H1 (cell line): ENCODE measurements at regions of chr1 and their contacts with region 1.

Region 1: DNA sequence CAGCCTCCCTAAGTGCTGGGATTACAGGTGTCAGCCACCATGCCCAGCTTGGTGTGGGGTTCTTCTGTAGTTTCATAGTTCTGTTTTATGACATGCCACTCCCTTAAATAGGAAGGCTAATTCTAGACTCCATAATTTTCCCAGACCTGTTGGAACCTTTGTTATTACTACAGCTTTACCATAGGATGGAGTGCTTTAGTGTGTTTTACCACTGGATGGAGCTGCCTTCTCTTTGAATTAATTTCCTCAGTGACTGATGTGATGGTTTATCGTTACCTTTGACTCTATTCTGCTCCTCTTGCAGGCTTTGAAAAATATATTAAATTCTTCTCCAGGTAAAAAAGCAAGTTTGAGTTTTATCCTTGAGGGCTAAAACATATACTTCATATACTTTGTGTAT is 84.6 kb upstream of the NEK7 start:
- DNase-seq: no peak
- H3K4me3 ChIP-seq: no peak overlapping the region
- H3K27ac ChIP-seq: no peak overlapping the region
- H3K4me1 ChIP-seq: no peaks in the 10 kb centered on the region
- H3K27me3 ChIP-seq: no peaks in the 10 kb centered on the region
- CTCF ChIP-seq: peak in 2 of 3 experiments; percentile 11 to 17; a peak in 2 of 4 replicates
- EP300 ChIP-seq: no peak
- POLR2A ChIP-seq: no peak
- RAD21 ChIP-seq: peak; percentile 55 to 57

Region 2: DNA sequence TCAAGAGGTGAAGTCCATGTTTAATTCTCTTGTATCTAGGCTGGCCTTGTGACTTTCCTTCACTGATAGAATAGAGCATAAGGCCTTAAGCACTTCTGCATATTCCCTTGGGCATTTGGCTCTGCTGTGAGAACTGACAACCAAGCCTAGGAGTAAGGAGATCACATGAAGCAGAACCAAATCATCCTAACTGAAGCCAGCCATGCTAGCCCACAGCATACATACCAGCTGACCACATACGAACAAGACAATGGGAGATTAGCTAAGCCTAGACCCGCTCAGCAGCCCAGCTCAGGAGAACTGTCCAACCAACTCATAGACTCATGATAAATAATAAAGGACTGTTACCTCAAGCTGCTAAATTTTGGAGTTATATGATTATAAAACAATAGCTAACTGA is 30.0 kb before region 1 on chr1:
- CTCF ChIA-PET with region 1: no interaction called
- POLR2A ChIA-PET with region 1: no interaction called
- DNase-seq: no peak
- H3K4me3 ChIP-seq: no peak overlapping the region
- H3K27ac ChIP-seq: no peak overlapping the region
- H3K4me1 ChIP-seq: no peaks in the 10 kb centered on the region
- H3K27me3 ChIP-seq: no peaks in the 10 kb centered on the region
- CTCF ChIP-seq: no peak
- EP300 ChIP-seq: no peak
- POLR2A ChIP-seq: no peak
- RAD21 ChIP-seq: no peak

Region 3: DNA sequence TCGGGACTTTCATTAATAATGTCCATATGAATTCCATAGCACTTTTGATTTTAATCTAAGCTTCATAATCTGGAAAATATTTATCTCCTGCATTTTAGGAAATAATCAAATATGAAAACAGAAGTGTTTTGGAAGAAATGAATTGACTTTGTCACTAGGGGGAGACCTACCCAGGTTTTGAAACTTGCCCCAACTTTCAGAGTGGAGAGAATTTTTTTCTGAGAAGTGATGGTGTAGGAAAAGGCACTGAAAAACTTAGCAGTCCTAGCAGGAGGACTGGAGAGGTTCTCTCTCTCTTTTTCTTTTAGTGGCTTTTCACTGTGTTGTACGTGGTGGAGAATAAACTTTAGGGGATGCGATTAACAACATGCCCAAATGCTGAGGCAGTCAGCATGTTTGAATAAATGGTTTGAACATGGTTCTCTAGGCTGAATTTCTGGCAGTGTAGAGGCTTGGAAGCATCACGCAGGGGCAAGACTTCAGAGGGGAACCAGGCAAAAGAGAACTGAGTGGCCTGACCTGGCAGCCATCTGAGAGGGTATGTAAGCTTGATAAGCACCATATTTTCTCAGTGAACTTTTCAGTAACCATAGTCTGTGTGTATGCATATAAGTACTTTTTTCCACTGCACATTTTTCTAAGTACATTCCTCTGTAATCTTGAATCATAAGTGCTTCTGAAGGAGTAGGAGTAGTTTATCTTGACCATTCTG is 16.3 kb after region 1 on chr1:
- CTCF ChIA-PET with region 1: interaction called, 29 read pairs
- POLR2A ChIA-PET with region 1: no interaction called
- DNase-seq: no peak
- H3K4me3 ChIP-seq: no peak overlapping the region
- H3K27ac ChIP-seq: no peak overlapping the region
- H3K4me1 ChIP-seq: peaks cover 0 to 5% (median 0%) of the 10 kb centered on the region in 4 experiments; a peak in 1 of 7 replicates
- H3K27me3 ChIP-seq: no peaks in the 10 kb centered on the region
- CTCF ChIP-seq: peak in 2 of 3 experiments; percentile 26 to 52; a peak in 2 of 4 replicates
- EP300 ChIP-seq: no peak
- POLR2A ChIP-seq: no peak
- RAD21 ChIP-seq: peak; percentile 66 to 67

Region 4: DNA sequence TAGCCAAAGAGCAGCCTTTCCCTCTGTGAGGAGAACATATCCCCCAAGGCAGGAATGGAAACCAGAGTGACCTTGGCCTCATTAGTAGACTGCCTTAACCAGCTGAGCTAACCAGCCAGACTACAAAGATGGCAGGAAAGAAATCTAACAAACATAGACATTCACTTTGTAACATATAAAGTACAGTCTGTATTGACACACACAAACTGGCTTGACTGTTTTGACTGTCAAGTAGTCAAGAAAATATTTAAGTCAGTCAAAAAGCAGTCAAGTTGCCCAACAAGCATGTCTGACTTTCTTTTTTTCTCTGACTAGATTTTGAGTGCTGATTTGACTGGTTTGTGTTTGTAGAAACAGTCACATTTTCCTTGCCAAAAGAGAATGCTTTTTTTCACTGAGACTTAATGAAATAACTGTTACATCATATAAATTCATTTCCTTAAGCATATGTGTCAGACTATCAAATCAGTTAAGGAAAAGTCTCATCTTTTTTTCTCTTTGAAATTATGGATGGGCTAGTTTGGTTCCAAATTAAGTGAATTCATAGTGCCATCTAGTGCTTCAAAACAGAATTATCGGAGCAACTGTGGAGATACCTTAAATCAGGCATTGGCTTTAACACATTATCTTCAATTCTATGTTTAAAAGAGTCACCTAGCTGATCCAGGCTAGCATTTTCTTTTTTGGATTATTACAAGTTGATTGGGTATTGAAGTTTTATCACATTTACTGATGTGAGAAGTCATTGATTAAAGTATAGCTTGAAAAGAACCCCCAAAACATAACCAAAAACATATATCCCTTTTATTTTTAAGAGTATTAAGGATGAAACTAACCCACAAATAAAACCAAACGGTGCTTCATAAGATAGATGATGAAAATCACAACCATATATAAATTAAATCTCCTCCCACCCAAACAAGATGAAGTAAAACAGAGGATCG is 393.3 kb after region 1 on chr1:
- CTCF ChIA-PET with region 1: interaction called, 26 read pairs
- POLR2A ChIA-PET with region 1: no interaction called
- DNase-seq: no peak
- H3K4me3 ChIP-seq: no peak overlapping the region
- H3K27ac ChIP-seq: no peak overlapping the region
- H3K4me1 ChIP-seq: no peaks in the 10 kb centered on the region
- H3K27me3 ChIP-seq: no peaks in the 10 kb centered on the region
- CTCF ChIP-seq: peak in 2 of 3 experiments; percentile 23 to 49; a peak in 2 of 4 replicates
- EP300 ChIP-seq: no peak
- POLR2A ChIP-seq: no peak
- RAD21 ChIP-seq: peak; percentile 75 to 78